ENCODE measurements at regions of chr16 and their contacts with region 1.

Region 1: DNA sequence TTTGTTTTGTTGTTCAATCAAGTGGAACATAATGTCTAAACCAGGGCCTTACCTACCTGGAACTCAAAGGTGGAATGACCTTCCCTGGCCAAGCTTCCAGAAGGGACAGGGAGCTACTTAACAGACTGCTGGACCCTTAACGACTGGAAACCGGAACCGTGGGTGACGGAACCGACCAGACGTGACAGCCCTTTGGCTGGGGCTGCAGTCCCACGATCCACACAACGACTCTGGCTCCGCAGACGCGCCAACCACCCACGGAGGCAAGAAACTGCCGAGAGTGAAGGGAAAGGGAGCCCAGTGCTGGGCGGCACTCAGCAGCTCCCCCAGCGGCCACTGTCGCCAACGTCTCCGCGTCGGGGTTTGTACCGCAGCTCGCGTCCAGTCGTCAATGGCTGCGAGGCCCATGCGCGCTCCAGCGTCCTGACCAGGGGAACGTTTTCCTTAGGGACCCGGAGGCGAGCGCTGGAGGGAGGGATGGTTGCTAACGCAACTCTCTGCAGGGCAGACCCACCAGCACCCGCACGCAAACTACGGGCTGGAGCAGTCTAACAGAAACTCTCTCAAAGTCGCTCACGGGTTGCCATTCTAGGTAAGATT is 5.5 kb upstream of the KIF22 start:
- DNase-seq: peak; percentile 88
- H3K4me3 Mint-ChIP-seq: peak overlapping the region; percentile 47
- H3K27ac Mint-ChIP-seq: peak overlapping the region; percentile 65
- H3K4me1 Mint-ChIP-seq: peaks cover 30% of the 10 kb centered on the region
- H3K27me3 Mint-ChIP-seq: no peaks in the 10 kb centered on the region

Region 2: GRCh38 chr16:29694384-29695195 is 90.4 kb before region 1 on chr16:
- CTCF ChIA-PET with region 1: interaction called, 42 read pairs
- POLR2A ChIA-PET with region 1: no interaction called
- intact Hi-C with region 1: no loop called
- DNase-seq: no peak
- H3K4me3 Mint-ChIP-seq: no peak overlapping the region
- H3K27ac Mint-ChIP-seq: no peak overlapping the region
- H3K4me1 Mint-ChIP-seq: peaks cover 4% of the 10 kb centered on the region
- H3K27me3 Mint-ChIP-seq: no peaks in the 10 kb centered on the region

Region 3: DNA sequence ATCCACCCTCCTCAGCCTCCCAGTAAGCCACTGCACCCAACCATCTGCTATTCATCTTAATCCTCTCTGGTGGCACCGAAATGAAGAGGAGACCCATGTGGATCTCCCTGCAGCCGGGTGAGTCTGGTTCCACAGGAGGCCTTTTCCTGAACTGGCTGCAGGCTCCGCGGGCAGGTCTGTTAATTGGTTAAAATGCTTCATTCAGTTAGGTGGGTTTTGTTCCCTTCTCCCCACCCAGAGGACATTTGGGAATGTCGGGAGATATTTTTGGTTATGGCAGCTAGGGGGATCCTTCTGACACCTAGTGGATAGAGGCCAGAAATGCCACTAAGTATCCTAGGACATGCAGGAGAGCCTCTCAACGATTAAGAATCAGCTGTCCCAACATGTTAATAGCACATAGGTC is 55.9 kb before region 1 on chr16:
- CTCF ChIA-PET with region 1: interaction called, 13 read pairs
- POLR2A ChIA-PET with region 1: interaction called, 4 read pairs
- intact Hi-C with region 1: loop called (anchors 1 kb)
- DNase-seq: no peak
- H3K4me3 Mint-ChIP-seq: no peak overlapping the region
- H3K27ac Mint-ChIP-seq: no peak overlapping the region
- H3K4me1 Mint-ChIP-seq: peaks cover 27% of the 10 kb centered on the region
- H3K27me3 Mint-ChIP-seq: no peaks in the 10 kb centered on the region

Region 4: DNA sequence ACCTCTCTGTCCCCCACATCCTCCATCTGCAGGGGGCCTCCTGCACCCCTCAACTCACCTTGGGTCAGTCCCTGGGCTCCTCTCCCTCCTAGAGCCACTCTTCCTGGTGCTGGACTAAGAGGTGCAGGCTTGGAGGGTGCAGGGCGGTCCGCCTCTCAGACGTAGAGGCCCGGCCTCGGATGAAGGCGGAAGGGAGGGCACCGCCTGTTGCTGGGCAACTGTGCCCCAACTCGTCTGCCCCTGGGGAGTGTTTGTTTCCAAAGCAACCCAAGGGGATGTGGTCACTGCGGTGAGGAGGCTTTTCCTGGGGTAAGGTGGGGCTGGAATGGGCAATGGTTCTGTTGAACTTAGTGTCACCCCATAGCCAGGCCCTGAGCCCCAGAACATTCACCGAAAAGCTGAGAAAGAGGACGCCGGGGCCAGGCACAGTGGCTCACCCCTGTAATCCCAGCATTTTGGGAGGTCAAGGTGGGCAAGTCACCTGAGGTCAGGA is 39.1 kb before region 1 on chr16 and contains the start of gene C16orf54:
- CTCF ChIA-PET with region 1: interaction called, 21 read pairs
- POLR2A ChIA-PET with region 1: interaction called, 15 read pairs
- intact Hi-C with region 1: loop called (anchors 2 kb)
- DNase-seq: peak; percentile 97
- H3K4me3 Mint-ChIP-seq: peak within 1 kb of the TSS; percentile 97
- H3K27ac Mint-ChIP-seq: peak within 1 kb of the TSS; percentile 98
- H3K4me1 Mint-ChIP-seq: peaks cover 60% of the 10 kb centered on the region
- H3K27me3 Mint-ChIP-seq: no peaks in the 10 kb centered on the region
- total RNA-seq, gene C16orf54: 25.2 to 26.2 TPM

Region 5: GRCh38 chr16:29756654-29757053 is 28.3 kb before region 1 on chr16:
- CTCF ChIA-PET with region 1: interaction called, 25 read pairs
- POLR2A ChIA-PET with region 1: interaction called, 5 read pairs
- intact Hi-C with region 1: no loop called
- DNase-seq: no peak
- H3K4me3 Mint-ChIP-seq: no peak overlapping the region
- H3K27ac Mint-ChIP-seq: no peak overlapping the region
- H3K4me1 Mint-ChIP-seq: peaks cover 20% of the 10 kb centered on the region
- H3K27me3 Mint-ChIP-seq: no peaks in the 10 kb centered on the region

Region 6: GRCh38 chr16:29839822-29840221 is 54.8 kb after region 1 on chr16:
- CTCF ChIA-PET with region 1: no interaction called
- POLR2A ChIA-PET with region 1: no interaction called
- intact Hi-C with region 1: no loop called
- DNase-seq: no peak
- H3K4me3 Mint-ChIP-seq: no peak overlapping the region
- H3K27ac Mint-ChIP-seq: no peak overlapping the region
- H3K4me1 Mint-ChIP-seq: peaks cover 2% of the 10 kb centered on the region
- H3K27me3 Mint-ChIP-seq: no peaks in the 10 kb centered on the region

Region 7: DNA sequence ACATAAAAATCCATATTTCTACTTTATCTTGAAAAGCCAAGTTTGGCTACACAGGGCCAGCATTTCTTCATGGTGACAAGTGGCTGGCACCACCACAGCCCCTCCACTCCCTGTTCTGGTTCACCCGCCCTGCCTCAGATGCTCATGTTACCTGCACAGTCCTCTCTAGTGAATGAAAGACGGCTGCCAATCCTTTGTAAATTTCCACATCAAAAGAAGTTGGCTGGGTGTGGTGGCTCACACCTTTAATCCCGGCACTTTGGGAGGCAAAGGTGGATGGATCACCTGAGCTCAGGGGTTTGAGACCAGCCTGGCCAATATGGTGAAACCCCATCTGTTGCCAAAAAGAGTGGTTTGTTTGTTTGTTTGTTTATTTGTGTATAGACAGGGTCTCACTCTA is 378.5 kb after region 1 on chr16:
- CTCF ChIA-PET with region 1: no interaction called
- POLR2A ChIA-PET with region 1: no interaction called
- intact Hi-C with region 1: no loop called
- DNase-seq: no peak
- H3K4me3 Mint-ChIP-seq: no peak overlapping the region
- H3K27ac Mint-ChIP-seq: no peak overlapping the region
- H3K4me1 Mint-ChIP-seq: peaks cover 20% of the 10 kb centered on the region
- H3K27me3 Mint-ChIP-seq: no peaks in the 10 kb centered on the region